ENCODE measurements at regions of chr19 and their contacts with region 1.

Region 1: GRCh38 chr19:58439576-58440554 is at the start of gene ZNF132:
- DNase-seq: peak; percentile 78 to 99 (median 95)
- ATAC-seq: peak; percentile 98
- H3K4me3 ChIP-seq: peak within 1 kb of the TSS; percentile 73
- H3K4me3 Mint-ChIP-seq: peak within 1 kb of the TSS; percentile 86 to 99 (median 96)
- H3K27ac ChIP-seq: peak within 1 kb of the TSS; percentile 81
- H3K27ac Mint-ChIP-seq: peak within 1 kb of the TSS; percentile 87 to 99 (median 97)
- H3K4me1 ChIP-seq: peaks cover 17% of the 10 kb centered on the region in 2 donors
- H3K4me1 Mint-ChIP-seq: peaks cover 21 to 35% (median 27%) of the 10 kb centered on the region in 7 donors
- H3K27me3 ChIP-seq: no peaks in the 10 kb centered on the region
- H3K27me3 Mint-ChIP-seq: no peaks in the 10 kb centered on the region
- total RNA-seq, gene ZNF132: 1.2 to 12.9 (median 4.9) TPM

Region 2: GRCh38 chr19:56806639-56807038 is 1633.2 kb before region 1 on chr19:
- CTCF ChIA-PET with region 1: no interaction called
- POLR2A ChIA-PET with region 1: no interaction called
- intact Hi-C with region 1: no loop called
- DNase-seq: no peak
- ATAC-seq: no peak
- H3K4me3 ChIP-seq: no peak overlapping the region
- H3K4me3 Mint-ChIP-seq: no peak overlapping the region
- H3K27ac ChIP-seq: no peak overlapping the region
- H3K27ac Mint-ChIP-seq: no peak overlapping the region
- H3K4me1 ChIP-seq: no peaks in the 10 kb centered on the region
- H3K4me1 Mint-ChIP-seq: no peaks in the 10 kb centered on the region
- H3K27me3 ChIP-seq: no peaks in the 10 kb centered on the region
- H3K27me3 Mint-ChIP-seq: no peaks in the 10 kb centered on the region

Region 3: GRCh38 chr19:57632987-57633831 is 806.7 kb before region 1 on chr19 and contains the start of gene ZNF211:
- CTCF ChIA-PET with region 1: no interaction called
- POLR2A ChIA-PET with region 1: no interaction called
- intact Hi-C with region 1: loop called in 1 of 2 experiments (anchors 1 kb)
- DNase-seq: peak; percentile 74 to 89 (median 86)
- ATAC-seq: peak; percentile 100
- H3K4me3 ChIP-seq: peak within 1 kb of the TSS; percentile 87
- H3K4me3 Mint-ChIP-seq: peak within 1 kb of the TSS; percentile 87 to 97 (median 94)
- H3K27ac ChIP-seq: peak within 1 kb of the TSS; percentile 90
- H3K27ac Mint-ChIP-seq: peak within 1 kb of the TSS; percentile 81 to 97 (median 89)
- H3K4me1 ChIP-seq: peaks cover 3 to 13% of the 10 kb centered on the region in 2 donors
- H3K4me1 Mint-ChIP-seq: peaks cover 21 to 36% (median 28%) of the 10 kb centered on the region in 7 donors
- H3K27me3 ChIP-seq: no peaks in the 10 kb centered on the region
- H3K27me3 Mint-ChIP-seq: no peaks in the 10 kb centered on the region
- total RNA-seq, gene ZNF211: 18.0 to 56.7 (median 33.7) TPM

Region 4: DNA sequence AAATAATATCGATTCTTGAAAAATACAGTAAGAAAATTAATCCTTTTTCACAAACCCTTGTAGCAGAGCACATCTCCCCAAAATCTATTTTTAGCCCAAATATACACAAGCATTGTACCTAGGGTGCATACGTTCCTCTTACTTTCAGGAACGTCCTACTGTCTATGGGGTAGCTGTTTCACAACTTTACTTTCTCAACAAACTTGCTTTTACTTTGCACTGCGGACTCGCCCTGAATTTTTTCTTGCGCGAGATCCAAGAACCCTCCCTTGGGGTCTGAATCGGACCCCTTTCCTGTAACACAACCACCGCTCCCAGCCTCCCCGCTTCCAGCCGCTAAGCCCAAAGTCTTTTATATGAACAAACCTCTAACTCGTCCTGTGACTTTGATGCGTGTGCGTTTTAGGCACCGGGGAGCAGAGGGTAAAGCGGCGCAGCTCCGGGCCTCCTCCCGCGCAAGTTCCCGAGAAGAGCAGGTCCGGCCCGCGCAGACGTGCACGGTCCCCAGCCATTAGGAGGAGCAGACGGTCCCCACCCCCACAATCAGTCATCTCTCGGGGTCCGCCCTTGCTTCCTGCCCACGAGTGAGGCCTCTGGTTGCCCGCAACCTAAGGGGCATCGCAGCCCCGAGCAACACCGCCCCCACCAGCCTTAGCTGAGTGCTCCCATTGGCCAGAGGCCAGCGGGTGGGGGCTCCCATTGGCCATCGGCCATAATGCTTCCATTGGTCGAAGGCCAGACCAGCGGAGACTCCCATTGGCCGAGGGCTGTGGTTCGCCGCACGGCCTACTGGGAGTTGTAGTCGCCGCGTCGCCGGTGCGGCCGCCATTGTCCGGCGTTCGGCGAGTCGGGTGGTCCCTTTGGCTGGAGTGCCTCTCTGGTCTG is 161.5 kb before region 1 on chr19 and contains the start of gene ZNF8:
- CTCF ChIA-PET with region 1: no interaction called
- POLR2A ChIA-PET with region 1: no interaction called
- intact Hi-C with region 1: loop called (anchors 1 kb)
- DNase-seq: peak; percentile 84 to 96 (median 93)
- ATAC-seq: peak; percentile 99
- H3K4me3 ChIP-seq: peak within 1 kb of the TSS; percentile 93
- H3K4me3 Mint-ChIP-seq: peak within 1 kb of the TSS; percentile 89 to 99 (median 95)
- H3K27ac ChIP-seq: peak within 1 kb of the TSS; percentile 80
- H3K27ac Mint-ChIP-seq: peak within 1 kb of the TSS; percentile 88 to 97 (median 96)
- H3K4me1 ChIP-seq: peaks cover 12 to 15% of the 10 kb centered on the region in 2 donors
- H3K4me1 Mint-ChIP-seq: peaks cover 28 to 63% (median 43%) of the 10 kb centered on the region in 7 donors
- H3K27me3 ChIP-seq: no peaks in the 10 kb centered on the region
- H3K27me3 Mint-ChIP-seq: no peaks in the 10 kb centered on the region
- total RNA-seq, gene ZNF8: 5.2 to 10.5 (median 10.0) TPM

Region 5: GRCh38 chr19:58386576-58387337 is 53.1 kb before region 1 on chr19 and contains the start of gene RPS5:
- CTCF ChIA-PET with region 1: no interaction called
- POLR2A ChIA-PET with region 1: no interaction called
- intact Hi-C with region 1: loop called (anchors 1 kb)
- DNase-seq: peak; percentile 84 to 98 (median 96)
- ATAC-seq: peak; percentile 97
- H3K4me3 ChIP-seq: peak within 1 kb of the TSS; percentile 75
- H3K4me3 Mint-ChIP-seq: peak within 1 kb of the TSS; percentile 89 to 96 (median 94)
- H3K27ac ChIP-seq: peak within 1 kb of the TSS; percentile 94
- H3K27ac Mint-ChIP-seq: peak within 1 kb of the TSS; percentile 94 to 99 (median 97)
- H3K4me1 ChIP-seq: peaks cover 26% of the 10 kb centered on the region in 2 donors
- H3K4me1 Mint-ChIP-seq: peaks cover 22 to 59% (median 45%) of the 10 kb centered on the region in 7 donors
- H3K27me3 ChIP-seq: no peaks in the 10 kb centered on the region
- H3K27me3 Mint-ChIP-seq: peaks cover 0 to 3% (median 0%) of the 10 kb centered on the region in 5 donors
- total RNA-seq, gene RPS5: 911 to 1,684 (median 1,502) TPM

Region 6: DNA sequence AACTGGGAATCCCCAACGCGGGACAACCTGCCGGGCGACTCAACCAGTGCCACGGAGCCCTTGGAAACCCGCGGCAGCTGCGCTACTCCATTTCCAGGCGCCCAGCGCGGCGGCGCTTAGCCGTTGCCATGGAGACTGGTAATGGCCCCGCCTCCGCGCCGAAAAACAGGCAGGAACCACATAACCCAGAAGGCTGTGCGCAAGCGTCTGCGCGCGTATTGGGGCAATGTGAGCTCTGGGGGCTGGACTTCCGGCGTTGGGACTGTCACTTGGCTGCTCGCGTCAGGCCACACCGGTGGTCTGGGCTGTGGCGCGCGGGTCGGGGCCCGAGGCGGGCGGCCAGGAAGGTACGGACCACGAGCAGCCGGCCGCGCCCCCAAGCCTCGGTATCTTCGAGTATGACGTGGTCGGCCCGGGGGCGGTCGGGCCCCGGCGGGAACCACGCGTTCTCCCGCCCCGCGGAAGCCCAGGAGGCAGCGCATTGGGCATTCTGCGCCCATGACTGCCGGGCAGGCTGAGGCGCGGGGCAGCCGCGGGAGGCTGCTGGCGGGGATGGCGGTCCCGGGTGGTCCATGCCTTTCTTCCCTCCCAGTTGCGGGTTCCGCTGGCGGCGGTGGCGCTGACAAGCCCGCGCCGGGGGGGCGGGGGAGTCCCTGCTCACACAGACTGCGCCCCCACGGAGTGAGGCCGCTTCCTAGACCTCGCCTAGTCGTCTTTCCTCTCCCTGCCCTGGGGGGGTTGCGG is 11.7 kb after region 1 on chr19 and contains the start of gene ZNF324B:
- CTCF ChIA-PET with region 1: no interaction called
- POLR2A ChIA-PET with region 1: interaction called, 5 read pairs
- intact Hi-C with region 1: loop called (anchors 1 kb)
- DNase-seq: peak; percentile 90 to 97 (median 94)
- ATAC-seq: peak; percentile 99
- H3K4me3 ChIP-seq: peak within 1 kb of the TSS; percentile 63
- H3K4me3 Mint-ChIP-seq: peak within 1 kb of the TSS; percentile 85 to 98 (median 88)
- H3K27ac ChIP-seq: peak within 1 kb of the TSS; percentile 81
- H3K27ac Mint-ChIP-seq: peak within 1 kb of the TSS in 8 of 9 donors; percentile 2 to 90 (median 71)
- H3K4me1 ChIP-seq: peaks cover 0 to 4% of the 10 kb centered on the region in 2 donors
- H3K4me1 Mint-ChIP-seq: peaks cover 12 to 23% (median 19%) of the 10 kb centered on the region in 7 donors
- H3K27me3 ChIP-seq: no peaks in the 10 kb centered on the region
- H3K27me3 Mint-ChIP-seq: peaks cover 8 to 26% (median 17%) of the 10 kb centered on the region in 5 donors
- total RNA-seq, gene ZNF324B: 9.1 to 13.9 (median 11.8) TPM

Region 7: DNA sequence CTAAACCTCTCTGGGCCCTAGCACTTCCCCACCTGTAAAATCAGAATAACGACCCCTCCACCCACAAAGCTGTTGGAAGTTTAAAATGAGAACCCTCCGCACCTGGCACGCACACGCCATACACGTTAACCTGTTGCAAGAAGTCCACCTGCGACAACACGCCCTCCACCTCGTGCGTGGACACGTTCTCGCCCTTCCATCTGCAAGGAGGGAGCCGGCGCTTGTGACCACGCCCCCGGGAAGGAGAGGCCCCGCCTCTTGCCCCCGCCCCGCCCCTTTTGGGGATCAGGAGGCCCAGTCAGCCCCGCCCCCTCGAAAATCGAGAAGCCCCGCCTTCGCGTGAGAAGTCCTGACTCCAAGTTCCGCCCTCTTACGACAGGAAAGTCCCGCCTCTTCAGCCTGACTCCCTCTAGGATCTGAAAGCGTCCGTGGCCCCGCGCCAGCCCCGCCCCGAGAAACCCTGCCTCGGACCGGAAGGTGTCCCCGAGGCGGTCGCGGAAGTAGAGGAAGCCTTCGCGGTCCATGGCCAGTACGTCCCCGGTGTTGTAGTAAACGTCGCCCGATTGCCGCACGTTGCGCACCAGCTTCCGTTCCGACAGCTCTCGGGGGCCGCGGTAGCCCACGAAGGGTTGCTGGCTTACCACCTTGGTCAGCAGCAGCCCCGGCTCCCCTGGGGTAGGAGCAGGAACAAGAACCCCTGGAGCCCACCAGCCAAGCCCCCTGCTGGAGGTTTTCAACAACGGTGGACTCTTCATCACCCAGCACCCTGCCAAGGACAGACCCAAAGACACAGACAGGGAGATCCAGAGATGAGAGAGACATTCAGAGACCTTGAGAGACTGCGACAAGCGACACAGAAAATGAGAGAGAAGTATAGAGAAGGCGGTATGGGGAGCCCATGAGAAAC is 59.4 kb after region 1 on chr19:
- CTCF ChIA-PET with region 1: no interaction called
- POLR2A ChIA-PET with region 1: no interaction called
- intact Hi-C with region 1: loop called (anchors 1 kb)
- DNase-seq: peak; percentile 76 to 96 (median 87)
- ATAC-seq: peak; percentile 93
- H3K4me3 ChIP-seq: peak overlapping the region; percentile 66
- H3K4me3 Mint-ChIP-seq: peak overlapping the region; percentile 88 to 98 (median 94)
- H3K27ac ChIP-seq: peak overlapping the region; percentile 72
- H3K27ac Mint-ChIP-seq: peak overlapping the region; percentile 90 to 97 (median 95)
- H3K4me1 ChIP-seq: peaks cover 12 to 15% of the 10 kb centered on the region in 2 donors
- H3K4me1 Mint-ChIP-seq: peaks cover 8 to 32% (median 21%) of the 10 kb centered on the region in 7 donors
- H3K27me3 ChIP-seq: no peaks in the 10 kb centered on the region
- H3K27me3 Mint-ChIP-seq: no peaks in the 10 kb centered on the region

Region 8: DNA sequence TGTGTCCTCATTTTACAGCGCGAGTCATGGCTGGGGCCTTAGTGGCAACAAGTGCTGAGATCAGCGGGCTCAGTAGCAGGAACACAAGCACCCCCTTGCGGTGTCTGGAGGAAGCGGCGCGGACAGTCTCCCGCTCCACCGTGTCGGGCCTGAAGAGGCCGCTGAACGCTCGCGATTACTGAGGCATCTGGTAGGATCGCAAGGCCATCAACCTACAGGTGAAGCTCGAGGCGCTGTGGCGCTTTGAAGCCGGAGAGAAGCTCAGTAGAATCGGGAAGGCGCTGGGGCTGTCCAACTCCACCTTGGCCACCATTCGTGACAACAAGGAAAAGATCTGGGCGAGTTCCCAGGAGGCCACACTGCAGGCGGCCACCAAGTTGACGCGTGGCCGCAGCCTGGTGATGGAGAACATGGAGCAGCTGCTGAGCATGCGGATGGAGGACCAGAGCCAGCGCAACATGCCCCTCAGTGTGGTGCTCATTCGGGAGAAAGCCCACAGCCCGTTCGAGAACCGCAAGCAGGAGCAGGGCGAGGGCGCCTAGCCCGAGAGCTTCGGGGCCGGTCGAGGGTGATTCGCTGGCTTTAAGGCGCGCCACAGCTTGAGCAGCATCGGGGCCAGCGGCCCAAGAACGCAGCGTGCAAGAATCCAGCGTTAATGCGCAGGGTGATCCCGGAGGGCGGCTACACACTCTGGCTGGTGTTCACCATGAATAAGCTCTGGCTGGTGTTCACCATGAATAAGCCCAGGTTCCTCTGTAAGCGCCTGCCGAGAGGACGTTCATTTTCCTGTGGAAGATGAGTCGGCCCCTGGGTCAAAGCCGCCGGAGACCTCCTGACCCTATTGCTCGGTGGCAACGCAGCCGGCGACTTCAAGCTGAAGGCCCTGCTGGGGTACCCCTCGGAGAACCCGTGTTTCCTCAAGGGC is 141.6 kb after region 1 on chr19:
- CTCF ChIA-PET with region 1: no interaction called
- POLR2A ChIA-PET with region 1: no interaction called
- intact Hi-C with region 1: no loop called
- DNase-seq: peak; percentile 81 to 91 (median 89)
- ATAC-seq: peak; percentile 100
- H3K4me3 ChIP-seq: no peak overlapping the region
- H3K4me3 Mint-ChIP-seq: peak overlapping the region in 1 of 10 donors; percentile 38
- H3K27ac ChIP-seq: peak overlapping the region; percentile 48
- H3K27ac Mint-ChIP-seq: peak overlapping the region; percentile 7 to 90 (median 78)
- H3K4me1 ChIP-seq: peaks cover 0 to 7% of the 10 kb centered on the region in 2 donors
- H3K4me1 Mint-ChIP-seq: peaks cover 12 to 29% (median 24%) of the 10 kb centered on the region in 7 donors
- H3K27me3 ChIP-seq: no peaks in the 10 kb centered on the region
- H3K27me3 Mint-ChIP-seq: no peaks in the 10 kb centered on the region

Measured in naive thymus-derived CD4-positive, alpha-beta T cell (primary cell).